Activated naive CD4-positive, alpha-beta T cell treated with anti-CD3 and anti-CD28 coated beads, Interleukin-2, amount 10 ng/mL, durations not matched to agents 7 days and 5 days (primary cell): ENCODE measurements at regions of chr19 and their contacts with region 1.

Region 1: GRCh38 chr19:13277104-13277809 is 127.0 kb downstream of the IER2 start:
- DNase-seq: peak; percentile 75
- H3K4me3 Mint-ChIP-seq: peak overlapping the region; percentile 32
- H3K27ac Mint-ChIP-seq: peak overlapping the region; percentile 86
- H3K4me1 Mint-ChIP-seq: peaks cover 24% of the 10 kb centered on the region
- H3K27me3 Mint-ChIP-seq: peaks cover 16% of the 10 kb centered on the region

Region 2: DNA sequence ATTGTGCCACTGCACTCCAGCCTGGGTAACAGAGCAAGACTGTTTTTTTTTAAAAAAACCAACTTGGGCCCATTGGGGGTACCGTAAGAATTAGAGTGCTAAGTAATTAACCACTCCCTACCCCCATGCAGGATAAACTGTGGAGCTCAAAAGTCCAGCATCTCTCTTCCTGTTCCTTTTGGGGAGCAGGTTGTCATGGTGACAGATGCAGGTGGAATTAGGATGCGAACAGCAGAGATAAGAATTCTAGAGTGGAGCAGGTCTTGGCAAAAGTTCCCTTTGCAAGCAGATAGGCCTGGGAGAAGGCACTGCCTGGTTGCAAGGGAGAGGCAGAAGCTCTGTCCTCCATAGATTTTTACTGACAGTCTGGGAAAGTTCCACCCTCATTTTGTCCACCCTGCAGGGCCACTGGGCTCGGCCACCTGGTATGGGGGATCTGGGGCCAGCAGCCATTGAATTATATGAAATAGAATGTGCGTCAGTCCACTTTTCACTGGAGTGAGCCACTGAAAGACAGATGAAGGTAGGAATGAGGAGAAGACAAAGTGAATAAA is 14.6 kb after region 1 on chr19:
- CTCF ChIA-PET with region 1: interaction called, 11 read pairs
- DNase-seq: no peak
- H3K4me3 Mint-ChIP-seq: no peak overlapping the region
- H3K27ac Mint-ChIP-seq: no peak overlapping the region
- H3K4me1 Mint-ChIP-seq: no peaks in the 10 kb centered on the region
- H3K27me3 Mint-ChIP-seq: peaks cover 7% of the 10 kb centered on the region

Region 3: DNA sequence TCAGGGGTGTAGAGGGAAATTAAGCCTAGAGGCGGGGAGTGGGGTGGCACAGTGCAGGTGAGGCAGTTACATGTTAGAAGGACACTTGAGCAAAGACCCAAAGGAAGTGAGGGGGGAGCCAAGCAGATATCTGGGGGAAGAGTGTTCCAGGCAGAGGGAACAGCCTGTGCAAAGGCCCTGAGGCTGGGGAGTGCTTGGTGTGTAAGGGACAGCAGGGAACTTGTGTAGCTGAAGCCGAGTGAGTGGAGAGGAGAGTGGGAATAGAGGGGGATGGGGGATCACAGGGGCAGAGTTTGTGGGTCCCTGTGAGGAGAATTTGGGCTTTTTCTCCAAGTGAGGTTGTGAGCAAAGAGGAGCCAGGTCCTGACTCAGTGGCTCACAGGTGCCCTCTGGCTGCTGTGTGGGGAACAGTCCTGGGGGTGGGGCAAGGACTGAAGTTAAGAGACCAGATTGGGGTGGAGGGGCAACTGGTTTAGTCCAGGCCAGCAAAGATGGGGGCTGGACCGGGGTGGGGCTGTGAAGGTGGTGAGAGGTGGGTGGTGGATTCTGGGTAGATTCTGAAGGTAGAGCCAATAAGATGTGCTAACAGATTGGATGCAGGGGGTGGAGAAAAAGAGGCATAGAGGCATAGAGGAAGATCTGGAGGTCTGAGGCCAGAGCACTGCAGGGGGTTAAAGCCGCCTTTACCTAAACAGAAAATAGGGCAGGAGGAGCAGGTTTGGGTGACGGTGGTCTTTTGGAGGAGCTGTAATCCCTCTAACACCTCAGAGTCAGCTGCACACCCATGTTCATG is 153.7 kb after region 1 on chr19:
- CTCF ChIA-PET with region 1: interaction called, 30 read pairs
- DNase-seq: peak; percentile 64
- H3K4me3 Mint-ChIP-seq: no peak overlapping the region
- H3K27ac Mint-ChIP-seq: no peak overlapping the region
- H3K4me1 Mint-ChIP-seq: no peaks in the 10 kb centered on the region
- H3K27me3 Mint-ChIP-seq: no peaks in the 10 kb centered on the region

Region 4: DNA sequence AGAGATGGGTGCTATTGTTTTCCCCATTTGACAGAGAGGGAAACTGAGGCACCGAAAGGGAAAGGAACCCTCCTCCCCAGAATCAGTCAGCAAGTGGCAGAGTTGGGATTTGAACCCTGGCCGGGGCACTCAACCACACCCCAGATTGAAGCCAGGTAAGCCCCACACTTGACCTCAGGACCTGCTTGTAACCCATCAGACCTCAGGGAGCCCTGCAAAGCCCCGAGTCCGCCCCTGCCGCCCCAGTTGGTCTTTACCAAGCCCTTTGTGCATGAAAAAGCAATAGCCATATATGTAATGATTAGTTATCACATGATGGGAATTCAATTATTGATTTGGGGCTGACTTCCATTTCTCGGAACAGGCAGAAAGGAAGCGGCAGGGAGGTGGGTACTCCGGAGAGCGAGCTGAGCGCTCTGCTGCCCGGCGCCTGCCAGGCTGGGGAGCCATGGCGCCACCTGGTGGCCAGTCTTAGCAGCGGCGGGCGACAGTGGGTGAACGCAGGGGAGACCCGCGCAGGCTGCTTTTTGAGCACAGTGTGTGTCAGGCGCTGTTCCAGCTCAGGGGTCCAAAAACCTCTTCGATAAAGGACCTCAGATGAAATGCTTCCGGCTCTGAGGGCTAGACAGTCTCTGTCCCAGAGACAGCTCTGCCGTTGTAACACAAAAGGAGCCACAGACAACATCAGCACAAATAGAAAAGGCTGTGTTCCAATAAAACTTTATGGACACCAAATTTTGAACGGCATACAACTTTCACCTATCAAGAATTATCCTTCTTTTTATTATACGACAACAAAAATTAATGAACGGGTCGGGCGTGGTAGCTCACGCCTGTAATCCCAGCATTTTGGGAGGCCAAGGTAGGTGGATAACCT is 311.9 kb after region 1 on chr19:
- CTCF ChIA-PET with region 1: interaction called, 51 read pairs
- DNase-seq: peak; percentile 86
- H3K4me3 Mint-ChIP-seq: no peak overlapping the region
- H3K27ac Mint-ChIP-seq: no peak overlapping the region
- H3K4me1 Mint-ChIP-seq: peaks cover 2% of the 10 kb centered on the region
- H3K27me3 Mint-ChIP-seq: peaks cover 10% of the 10 kb centered on the region